Activated T-helper 1 cell treated with anti-CD3 and anti-CD28 coated beads, Interleukin-12 subunit alpha, Interleukin-12 subunit beta, Interleukin-2, Interleukin-4 antibody, amounts not matched to agents 30 ng/mL and 10 ng/mL and 1 ng/mL, durations not matched to agents 14 hours and 24 hours and 36 hours (primary cell): ENCODE measurements at regions of chr6 and their contacts with region 1.

Region 1: DNA sequence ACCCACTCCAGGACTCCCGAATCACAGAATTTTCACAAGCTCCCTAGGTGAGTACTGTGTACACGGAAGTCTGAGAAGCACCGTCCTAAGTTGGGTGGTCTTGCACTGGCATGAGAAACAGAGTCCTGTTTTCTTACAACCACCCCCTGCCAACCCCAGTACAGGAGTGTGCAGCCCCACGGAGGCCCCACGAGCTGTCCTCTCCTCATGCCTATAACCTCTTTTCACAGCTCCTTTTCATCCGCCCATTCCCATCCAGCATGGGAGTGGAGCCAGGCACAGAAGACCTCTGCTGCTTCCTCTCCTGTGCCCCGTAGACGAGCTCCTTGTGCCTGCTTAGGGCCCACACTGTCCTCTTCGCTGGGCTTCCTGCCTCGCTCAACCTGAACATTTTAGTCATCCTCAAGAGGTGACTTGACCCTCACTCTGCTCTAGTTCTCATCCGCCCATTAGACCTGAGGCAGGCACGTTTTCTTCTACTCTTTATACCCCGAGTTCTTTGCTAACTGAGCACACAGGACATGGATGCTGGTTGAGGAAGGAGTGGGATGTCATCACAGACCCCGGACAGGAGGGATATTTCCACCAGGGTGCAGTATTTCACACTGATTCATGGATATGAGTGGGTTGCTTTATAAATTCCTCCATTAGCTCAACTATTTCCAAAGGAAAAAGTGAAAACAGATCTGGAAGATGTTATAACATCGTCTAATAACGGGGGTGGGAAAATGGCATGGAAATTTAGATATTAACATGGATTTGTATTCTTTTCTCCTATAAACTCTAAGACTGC is 160.5 kb downstream of the TTLL2 start:
- DNase-seq: no peak
- H3K4me3 Mint-ChIP-seq: no peak overlapping the region
- H3K27ac Mint-ChIP-seq: no peak overlapping the region
- H3K4me1 Mint-ChIP-seq: no peaks in the 10 kb centered on the region
- H3K27me3 Mint-ChIP-seq: peaks cover 19% of the 10 kb centered on the region

Region 2: DNA sequence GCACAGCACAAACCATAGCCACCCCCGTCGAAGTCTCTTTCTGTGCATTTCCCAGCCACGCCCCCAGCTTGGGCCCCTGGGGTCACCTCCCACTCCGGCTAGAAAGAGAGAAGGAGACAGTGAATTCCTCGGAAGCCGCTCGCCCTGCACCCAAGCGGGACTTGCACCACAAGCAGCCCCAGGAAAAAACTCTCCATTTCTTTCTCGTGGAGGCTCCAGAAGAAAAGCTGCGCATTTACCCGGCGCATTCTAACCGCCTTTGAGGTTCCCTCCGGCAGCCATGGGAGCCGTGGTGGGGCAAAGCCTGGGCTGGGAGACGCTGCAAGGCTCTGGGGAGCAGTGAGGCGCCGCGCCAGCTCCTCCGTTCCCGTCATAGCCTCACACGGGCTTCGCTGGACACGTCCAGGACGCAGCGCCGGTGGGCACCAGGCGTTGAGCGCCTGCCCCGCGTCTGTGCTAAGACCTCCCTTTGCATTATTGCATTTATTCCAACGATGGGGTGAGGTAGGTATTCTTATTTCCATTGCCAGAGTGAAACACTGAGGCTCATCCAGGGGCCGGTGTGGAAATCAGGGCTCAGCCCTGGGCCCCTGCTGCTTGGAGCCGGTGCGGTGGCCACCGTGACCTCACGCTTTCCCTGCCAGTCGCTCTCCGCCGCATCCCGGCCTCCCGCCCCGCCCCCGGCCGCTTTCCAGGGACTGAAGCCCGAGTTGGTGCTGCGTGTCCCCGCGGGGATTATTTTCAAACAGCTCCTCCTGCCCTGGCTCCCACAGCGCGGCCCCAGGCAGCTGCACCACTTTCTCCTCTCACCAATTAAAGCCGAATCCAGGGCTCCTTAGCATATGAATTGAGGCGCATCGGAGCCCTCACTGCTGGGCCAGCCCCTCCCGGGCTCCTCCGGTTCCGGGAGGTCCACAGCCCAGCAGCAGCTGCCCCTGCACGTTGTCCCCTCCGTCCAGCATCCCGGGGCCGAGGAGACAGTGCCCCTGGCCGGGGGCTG is 193.0 kb after region 1 on chr6:
- intact Hi-C with region 1: no loop called
- DNase-seq: no peak
- H3K4me3 Mint-ChIP-seq: no peak overlapping the region
- H3K27ac Mint-ChIP-seq: no peak overlapping the region
- H3K4me1 Mint-ChIP-seq: no peaks in the 10 kb centered on the region
- H3K27me3 Mint-ChIP-seq: peaks cover 72% of the 10 kb centered on the region

Region 3: DNA sequence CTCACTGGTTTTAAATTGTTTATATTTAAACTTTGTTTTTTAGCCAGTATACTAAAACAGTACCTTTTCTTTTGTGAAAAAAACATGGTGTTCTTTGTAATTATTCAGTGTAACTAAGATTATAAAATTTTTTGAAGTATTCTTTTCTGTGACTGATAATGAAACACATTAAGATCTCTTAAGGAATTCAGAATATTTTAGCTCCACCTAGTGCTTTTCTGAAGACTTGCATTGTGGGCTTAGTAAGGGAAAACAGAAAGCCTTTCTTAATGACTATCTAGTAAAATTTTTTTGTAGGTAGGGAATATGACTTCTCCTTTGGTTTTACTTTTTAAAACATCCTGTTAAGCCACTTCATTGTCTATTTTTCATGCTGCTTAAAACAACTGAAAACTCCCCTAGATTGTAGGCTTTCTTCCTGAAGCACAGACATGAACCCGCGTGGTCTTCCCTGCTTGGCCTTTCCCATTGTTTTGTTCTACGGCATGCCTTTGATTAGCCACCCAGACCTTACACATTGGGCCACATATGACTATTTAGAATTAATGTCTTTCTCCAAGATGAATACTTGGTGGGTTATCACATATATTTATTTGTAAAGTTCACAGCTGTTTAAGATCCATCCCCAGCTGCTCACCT is 413.4 kb after region 1 on chr6:
- intact Hi-C with region 1: loop called (anchors 1 kb)
- DNase-seq: no peak
- H3K4me3 Mint-ChIP-seq: no peak overlapping the region
- H3K27ac Mint-ChIP-seq: no peak overlapping the region
- H3K4me1 Mint-ChIP-seq: no peaks in the 10 kb centered on the region
- H3K27me3 Mint-ChIP-seq: no peaks in the 10 kb centered on the region